Activated CD4-positive, alpha-beta T cell treated with anti-CD3 and anti-CD28 coated beads for 36 hours (primary cell): ENCODE measurements at regions of chr17 and their contacts with region 1.

Region 1: DNA sequence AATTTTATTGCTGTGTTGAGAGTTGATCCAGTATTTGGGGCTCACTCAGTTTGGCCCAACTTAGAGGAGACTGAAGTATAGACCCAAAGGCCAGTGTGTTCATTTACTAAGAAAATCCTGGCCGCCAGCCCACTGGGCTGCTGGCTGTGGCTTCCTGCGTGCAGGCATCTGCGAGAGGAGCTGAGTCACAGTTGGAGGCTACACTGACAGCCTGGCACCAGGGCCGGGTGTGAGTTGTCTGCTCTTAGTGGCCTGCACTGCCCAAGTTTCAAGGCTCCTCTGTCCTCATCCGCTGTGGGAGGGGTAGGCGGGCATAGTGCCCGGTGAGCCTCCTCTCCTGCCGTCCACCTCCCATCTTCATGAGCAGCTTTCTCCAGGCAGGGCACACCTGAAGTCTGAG is 54.2 kb downstream of the PLD6 start:
- DNase-seq: peak; percentile 69
- ATAC-seq: peak; percentile 48
- H3K4me3 Mint-ChIP-seq: no peak overlapping the region
- H3K27ac Mint-ChIP-seq: peak overlapping the region; percentile 75
- H3K4me1 Mint-ChIP-seq: peaks cover 62% of the 10 kb centered on the region
- H3K27me3 Mint-ChIP-seq: no peaks in the 10 kb centered on the region

Region 2: GRCh38 chr17:16676676-16677268 is 475.2 kb before region 1 on chr17:
- CTCF ChIA-PET with region 1: no interaction called
- POLR2A ChIA-PET with region 1: no interaction called
- intact Hi-C with region 1: no loop called
- DNase-seq: no peak
- ATAC-seq: no peak
- H3K4me3 Mint-ChIP-seq: no peak overlapping the region
- H3K27ac Mint-ChIP-seq: no peak overlapping the region
- H3K4me1 Mint-ChIP-seq: no peaks in the 10 kb centered on the region
- H3K27me3 Mint-ChIP-seq: peaks cover 6% of the 10 kb centered on the region

Region 3: DNA sequence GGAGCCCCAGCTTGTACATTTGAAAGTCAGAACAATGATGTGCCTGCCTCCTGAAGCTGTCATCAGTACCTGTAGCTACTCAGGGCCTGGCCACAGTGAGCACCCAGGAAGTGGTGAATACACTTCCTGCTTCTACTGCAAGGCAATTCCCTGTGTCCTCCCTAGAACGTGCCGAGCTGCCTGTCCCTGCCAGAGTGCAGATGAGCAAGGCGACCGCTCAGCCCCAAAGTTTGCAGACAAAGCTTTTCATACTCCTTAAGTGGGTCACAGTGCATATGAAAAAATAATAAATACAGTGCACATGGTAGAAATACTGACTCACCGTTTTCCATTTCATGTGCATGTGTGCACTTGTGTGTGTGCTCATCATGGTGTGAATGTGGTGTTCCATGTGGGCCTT is 32.4 kb before region 1 on chr17:
- CTCF ChIA-PET with region 1: interaction called, 4 read pairs
- POLR2A ChIA-PET with region 1: interaction called, 3 read pairs
- intact Hi-C with region 1: loop called in 1 of 2 experiments (anchors 2 kb)
- DNase-seq: peak; percentile 82
- ATAC-seq: peak; percentile 92
- H3K4me3 Mint-ChIP-seq: no peak overlapping the region
- H3K27ac Mint-ChIP-seq: peak overlapping the region; percentile 87
- H3K4me1 Mint-ChIP-seq: peaks cover 80% of the 10 kb centered on the region
- H3K27me3 Mint-ChIP-seq: no peaks in the 10 kb centered on the region

Region 4: DNA sequence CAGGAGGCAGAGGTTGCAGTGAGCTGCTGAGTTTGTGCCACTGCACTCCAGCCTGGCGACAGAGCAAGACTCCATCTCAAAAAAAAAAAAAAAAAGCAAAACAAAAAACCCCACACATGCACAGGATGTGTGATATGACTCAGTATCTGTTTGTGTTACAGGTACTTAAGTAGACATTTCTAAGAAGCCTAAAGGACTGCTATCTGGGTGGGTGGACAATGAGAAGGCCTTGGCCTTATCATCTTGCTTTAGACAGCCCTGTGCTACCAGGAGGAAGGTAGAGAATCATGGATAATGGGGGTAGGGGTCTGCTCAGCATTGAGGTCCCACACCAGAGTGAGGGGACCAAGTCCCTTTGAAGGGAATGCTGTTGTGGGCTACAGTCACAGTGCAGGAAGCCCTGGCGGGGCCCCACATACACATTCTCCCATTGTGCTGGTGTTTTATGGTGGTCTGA is 27.4 kb after region 1 on chr17:
- CTCF ChIA-PET with region 1: interaction called, 4 read pairs
- POLR2A ChIA-PET with region 1: no interaction called
- intact Hi-C with region 1: loop called (anchors 2 kb)
- DNase-seq: peak; percentile 35
- ATAC-seq: peak; percentile 65
- H3K4me3 Mint-ChIP-seq: peak overlapping the region; percentile 51
- H3K27ac Mint-ChIP-seq: peak overlapping the region; percentile 97
- H3K4me1 Mint-ChIP-seq: peaks cover 93% of the 10 kb centered on the region
- H3K27me3 Mint-ChIP-seq: no peaks in the 10 kb centered on the region